PC-3 (cell line): ENCODE measurements at regions of chrX and their contacts with region 1.

Region 1: DNA sequence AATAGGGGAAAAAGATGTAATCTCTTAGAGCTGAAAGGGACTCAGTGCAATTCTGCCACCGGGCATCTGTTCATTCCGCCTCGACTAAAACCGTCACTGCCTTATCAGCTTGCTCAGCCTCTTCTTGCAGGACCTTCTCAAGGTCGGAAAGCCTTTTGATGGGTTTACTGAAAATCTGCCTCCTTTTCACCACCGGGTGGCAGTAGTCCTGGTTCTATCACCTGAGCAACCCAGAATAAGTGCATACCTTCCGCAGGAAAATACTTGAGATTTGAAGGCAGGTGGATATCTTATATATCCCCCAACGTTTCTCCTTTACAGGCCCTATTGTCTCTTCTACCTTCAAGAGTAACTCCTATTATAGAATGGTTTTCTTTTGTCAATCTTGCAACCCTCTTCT is 103.4 kb upstream of the PAK3 start:
- DNase-seq: peak; percentile 57
- ATAC-seq: peak; percentile 55
- H3K4me3 ChIP-seq: no peak overlapping the region
- H3K27ac ChIP-seq: no peak overlapping the region
- H3K4me1 ChIP-seq: no peaks in the 10 kb centered on the region
- H3K27me3 ChIP-seq: no peaks in the 10 kb centered on the region
- CTCF ChIP-seq: peak; percentile 65

Region 2: DNA sequence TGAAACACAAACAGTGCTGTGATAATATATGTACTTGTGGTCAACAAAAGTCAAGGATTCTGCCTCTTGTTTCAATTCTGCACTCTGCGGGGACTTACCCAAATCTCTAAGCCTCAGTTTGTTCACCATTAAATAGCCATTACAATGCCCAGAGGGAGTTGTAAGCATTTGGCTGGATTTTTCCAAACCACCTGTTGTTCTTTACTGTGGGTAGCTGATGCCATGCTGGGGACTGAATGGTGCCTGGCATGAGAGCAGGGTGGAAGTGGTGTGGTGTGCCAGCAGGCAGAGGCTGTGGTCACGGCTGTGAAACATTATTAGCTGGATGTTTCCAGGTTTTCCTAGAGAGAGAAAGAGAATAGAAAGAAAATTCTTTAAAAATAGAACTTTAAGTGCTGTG is 42.6 kb after region 1 on chrX:
- CTCF ChIA-PET with region 1: no interaction called
- POLR2A ChIA-PET with region 1: no interaction called
- intact Hi-C with region 1: loop called (anchors 5 kb)
- DNase-seq: no peak
- ATAC-seq: no peak
- H3K4me3 ChIP-seq: no peak overlapping the region
- H3K27ac ChIP-seq: no peak overlapping the region
- H3K4me1 ChIP-seq: peaks cover 20% of the 10 kb centered on the region
- H3K27me3 ChIP-seq: no peaks in the 10 kb centered on the region
- CTCF ChIP-seq: no peak